Transverse colon (tissue), 4 donors: ENCODE measurements at regions of chr19 and their contacts with region 1.

Region 1: GRCh38 chr19:17292286-17293097 is 10.7 kb downstream of the ABHD8 start:
- DNase-seq: peak; percentile 85
- H3K4me3 ChIP-seq: peak overlapping the region; percentile 36 to 61 (median 50)
- H3K27ac ChIP-seq: peak overlapping the region; percentile 62 to 90 (median 82)
- H3K4me1 ChIP-seq: peaks cover 0 to 14% (median 9%) of the 10 kb centered on the region in 4 donors
- H3K27me3 ChIP-seq: no peaks in the 10 kb centered on the region
- CTCF ChIP-seq: peak; percentile 62 to 83 (median 70)
- EP300 ChIP-seq: no peak
- POLR2A ChIP-seq: peak; percentile 52

Region 2: DNA sequence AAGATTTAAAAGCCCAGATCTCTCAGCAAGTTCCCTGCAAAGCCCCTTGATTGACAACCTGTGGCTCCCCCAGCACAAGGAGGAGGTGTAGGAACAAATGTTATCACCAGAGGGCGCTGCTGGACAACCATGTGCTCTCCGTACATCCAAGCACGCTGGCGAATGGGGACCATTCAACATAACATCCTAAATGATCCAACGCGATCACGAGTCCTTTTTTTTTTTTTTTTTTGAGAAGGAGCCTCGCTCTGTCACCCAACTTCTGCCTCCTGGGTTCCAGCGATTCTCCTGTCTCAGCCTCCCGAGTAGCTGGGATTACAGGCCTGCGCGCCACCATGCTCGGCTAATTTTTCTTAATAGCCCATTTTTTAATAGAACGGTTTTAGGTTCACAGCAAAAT is 520.9 kb before region 1 on chr19:
- in situ Hi-C with region 1: loop called in 1 of 4 experiments (anchors 25 kb)
- intact Hi-C with region 1: no loop called
- DNase-seq: peak; percentile 82
- H3K4me3 ChIP-seq: no peak overlapping the region
- H3K27ac ChIP-seq: no peak overlapping the region
- H3K4me1 ChIP-seq: no peaks in the 10 kb centered on the region
- H3K27me3 ChIP-seq: no peaks in the 10 kb centered on the region
- CTCF ChIP-seq: peak; percentile 84 to 90 (median 86)
- EP300 ChIP-seq: no peak
- POLR2A ChIP-seq: no peak

Region 3: GRCh38 chr19:17323964-17324332 is 31.5 kb after region 1 on chr19:
- in situ Hi-C with region 1: no loop called
- intact Hi-C with region 1: no loop called
- DNase-seq: no peak
- H3K4me3 ChIP-seq: no peak overlapping the region
- H3K27ac ChIP-seq: peak overlapping the region in 1 of 4 donors; percentile 21
- H3K4me1 ChIP-seq: peaks cover 7 to 22% (median 16%) of the 10 kb centered on the region in 4 donors
- H3K27me3 ChIP-seq: peaks cover 3% of the 10 kb centered on the region
- CTCF ChIP-seq: no peak
- EP300 ChIP-seq: no peak
- POLR2A ChIP-seq: no peak